Common myeloid progenitor, CD34-positive (primary cell): ENCODE measurements at regions of chrX and their contacts with region 1.

Region 1: DNA sequence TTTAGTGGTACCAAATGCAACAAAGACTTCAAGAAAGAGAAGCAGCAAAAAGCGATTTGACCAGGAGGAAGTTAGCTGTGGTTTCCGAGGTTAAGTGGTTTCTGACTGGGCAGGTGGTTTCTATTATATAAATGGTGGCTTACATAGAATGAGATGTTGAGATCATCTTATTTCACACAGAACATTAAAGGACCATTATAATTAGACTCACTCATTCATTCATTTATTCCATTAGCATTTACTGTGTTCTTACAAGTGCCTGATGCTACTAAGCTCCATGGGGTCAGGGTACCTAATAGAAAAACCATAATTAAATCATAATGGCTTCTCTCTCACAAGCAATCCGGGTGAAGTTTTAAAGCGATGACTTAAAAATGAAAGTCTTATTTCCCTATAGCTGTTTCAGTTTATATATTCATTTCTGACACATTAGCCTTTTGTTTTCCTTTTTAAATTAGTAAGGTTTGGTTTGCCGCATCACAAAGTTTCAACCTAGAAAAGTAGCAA is 10.6 kb downstream of the TSPAN6 start:
- DNase-seq: peak; percentile 67 to 93 (median 90)
- H3K4me3 ChIP-seq: no peak overlapping the region
- H3K27ac ChIP-seq: no peak overlapping the region
- H3K4me1 ChIP-seq: peaks cover 8 to 15% (median 9%) of the 10 kb centered on the region in 4 experiments
- H3K27me3 ChIP-seq: peaks cover 0 to 41% (median 29%) of the 10 kb centered on the region in 5 experiments

Region 2: GRCh38 chrX:100615005-100615404 is 11.0 kb before region 1 on chrX:
- CTCF ChIA-PET with region 1: interaction called, 10 read pairs
- POLR2A ChIA-PET with region 1: no interaction called
- DNase-seq: peak; percentile 43 to 68 (median 65)
- H3K4me3 ChIP-seq: no peak overlapping the region
- H3K27ac ChIP-seq: no peak overlapping the region
- H3K4me1 ChIP-seq: no peaks in the 10 kb centered on the region
- H3K27me3 ChIP-seq: peaks cover 0 to 51% (median 25%) of the 10 kb centered on the region in 5 experiments

Region 3: GRCh38 chrX:100654261-100654660 is 28.2 kb after region 1 on chrX:
- CTCF ChIA-PET with region 1: no interaction called
- POLR2A ChIA-PET with region 1: no interaction called
- DNase-seq: peak in 2 of 3 donors; percentile 9 to 17
- H3K4me3 ChIP-seq: no peak overlapping the region
- H3K27ac ChIP-seq: no peak overlapping the region
- H3K4me1 ChIP-seq: no peaks in the 10 kb centered on the region
- H3K27me3 ChIP-seq: peaks cover 0 to 16% (median 0%) of the 10 kb centered on the region in 5 experiments